HepG2 (cell line): ENCODE measurements at regions of chr1 and their contacts with region 1.

Region 1: DNA sequence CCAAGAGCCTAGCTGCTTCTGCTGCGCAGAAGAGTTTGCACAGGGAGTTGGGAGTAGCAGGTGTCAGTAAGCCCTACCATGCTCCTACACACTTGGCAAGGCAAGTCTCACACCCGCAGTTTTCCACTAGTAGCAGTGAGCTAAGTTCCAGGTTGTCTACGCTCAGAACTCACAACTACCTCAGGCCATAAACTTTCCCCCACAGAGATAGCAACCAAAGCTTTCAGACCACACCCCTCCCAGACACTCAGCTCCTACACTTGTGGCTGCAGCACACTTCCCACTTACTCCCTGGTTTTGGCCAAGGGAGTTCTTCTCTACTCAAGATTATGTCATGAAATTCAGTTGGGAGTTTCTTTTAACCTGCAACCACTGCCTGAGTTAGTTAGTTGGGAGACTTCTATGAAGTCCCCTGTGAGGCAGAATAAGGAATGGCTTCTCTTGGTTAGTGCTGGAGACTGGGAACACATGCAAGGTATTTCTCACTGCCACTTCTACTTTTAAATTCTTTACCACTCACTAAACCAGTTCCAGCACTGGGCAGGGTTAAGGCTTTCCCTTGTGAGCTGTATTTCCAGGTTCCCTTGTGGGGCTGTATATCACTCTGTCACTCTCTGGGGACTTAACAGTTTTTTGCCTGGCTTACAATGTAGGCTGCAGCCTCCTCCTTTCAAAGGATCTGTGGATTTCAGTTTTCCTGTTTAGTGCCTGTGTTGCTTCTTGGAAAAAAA is 18.3 kb upstream of the MAB21L3 start:
- DNase-seq: no peak
- ATAC-seq: no peak
- H3K4me3 ChIP-seq: no peak overlapping the region
- H3K27ac ChIP-seq: no peak overlapping the region
- H3K4me1 ChIP-seq: peaks cover 9% of the 10 kb centered on the region
- H3K27me3 ChIP-seq: no peaks in the 10 kb centered on the region
- CTCF ChIP-seq: no peak
- EP300 ChIP-seq: no peak
- POLR2A ChIP-seq: no peak
- RAD21 ChIP-seq: no peak

Region 2: GRCh38 chr1:116033322-116033721 is 59.6 kb before region 1 on chr1:
- CTCF ChIA-PET with region 1: no interaction called
- POLR2A ChIA-PET with region 1: no interaction called
- in situ Hi-C with region 1: no loop called
- intact Hi-C with region 1: loop called (anchors 10 kb)
- DNase-seq: no peak
- ATAC-seq: no peak
- H3K4me3 ChIP-seq: no peak overlapping the region
- H3K27ac ChIP-seq: no peak overlapping the region
- H3K4me1 ChIP-seq: no peaks in the 10 kb centered on the region
- H3K27me3 ChIP-seq: no peaks in the 10 kb centered on the region
- CTCF ChIP-seq: no peak
- EP300 ChIP-seq: no peak
- POLR2A ChIP-seq: no peak
- RAD21 ChIP-seq: no peak

Region 3: GRCh38 chr1:116075577-116076380 is 17.1 kb before region 1 on chr1:
- CTCF ChIA-PET with region 1: no interaction called
- POLR2A ChIA-PET with region 1: no interaction called
- in situ Hi-C with region 1: no loop called
- intact Hi-C with region 1: loop called (anchors 1 kb)
- DNase-seq: no peak
- ATAC-seq: no peak
- H3K4me3 ChIP-seq: no peak overlapping the region
- H3K27ac ChIP-seq: no peak overlapping the region
- H3K4me1 ChIP-seq: no peaks in the 10 kb centered on the region
- H3K27me3 ChIP-seq: no peaks in the 10 kb centered on the region
- CTCF ChIP-seq: no peak
- EP300 ChIP-seq: no peak
- POLR2A ChIP-seq: no peak
- RAD21 ChIP-seq: no peak